ENCODE measurements at regions of chr2 and their contacts with region 1.

Region 1: GRCh38 chr2:134154246-134154645 is 99.6 kb upstream of the MGAT5 start:
- DNase-seq: peak; percentile 36
- ATAC-seq: peak; percentile 56
- H3K4me3 Mint-ChIP-seq: peak overlapping the region; percentile 48
- H3K27ac Mint-ChIP-seq: peak overlapping the region; percentile 79
- H3K4me1 Mint-ChIP-seq: peaks cover 84% of the 10 kb centered on the region
- H3K27me3 Mint-ChIP-seq: no peaks in the 10 kb centered on the region
- CTCF ChIP-seq: no peak

Region 2: GRCh38 chr2:134173338-134174016 is 19.2 kb after region 1 on chr2:
- CTCF ChIA-PET with region 1: no interaction called
- POLR2A ChIA-PET with region 1: interaction called, 5 read pairs
- intact Hi-C with region 1: loop called (anchors 1 kb)
- DNase-seq: no peak
- ATAC-seq: no peak
- H3K4me3 Mint-ChIP-seq: peak overlapping the region; percentile 11
- H3K27ac Mint-ChIP-seq: peak overlapping the region; percentile 57
- H3K4me1 Mint-ChIP-seq: peaks cover 92% of the 10 kb centered on the region
- H3K27me3 Mint-ChIP-seq: no peaks in the 10 kb centered on the region
- CTCF ChIP-seq: no peak

Region 3: GRCh38 chr2:134253804-134254203 is 99.6 kb after region 1 on chr2 and contains the start of gene MGAT5:
- CTCF ChIA-PET with region 1: no interaction called
- POLR2A ChIA-PET with region 1: interaction called, 11 read pairs
- intact Hi-C with region 1: no loop called
- DNase-seq: no peak
- ATAC-seq: peak; percentile 43
- H3K4me3 Mint-ChIP-seq: peak within 1 kb of the TSS; percentile 74
- H3K27ac Mint-ChIP-seq: peak within 1 kb of the TSS; percentile 95
- H3K4me1 Mint-ChIP-seq: peaks cover 95% of the 10 kb centered on the region
- H3K27me3 Mint-ChIP-seq: no peaks in the 10 kb centered on the region
- CTCF ChIP-seq: no peak
- total RNA-seq, gene MGAT5: 66.7 and 69.0 TPM in 2 replicates

Measured in activated B cell treated with CpG ODN at 0.5 μM for 24 hours (primary cell).